ENCODE measurements at regions of chr2 and their contacts with region 1.

Region 1: DNA sequence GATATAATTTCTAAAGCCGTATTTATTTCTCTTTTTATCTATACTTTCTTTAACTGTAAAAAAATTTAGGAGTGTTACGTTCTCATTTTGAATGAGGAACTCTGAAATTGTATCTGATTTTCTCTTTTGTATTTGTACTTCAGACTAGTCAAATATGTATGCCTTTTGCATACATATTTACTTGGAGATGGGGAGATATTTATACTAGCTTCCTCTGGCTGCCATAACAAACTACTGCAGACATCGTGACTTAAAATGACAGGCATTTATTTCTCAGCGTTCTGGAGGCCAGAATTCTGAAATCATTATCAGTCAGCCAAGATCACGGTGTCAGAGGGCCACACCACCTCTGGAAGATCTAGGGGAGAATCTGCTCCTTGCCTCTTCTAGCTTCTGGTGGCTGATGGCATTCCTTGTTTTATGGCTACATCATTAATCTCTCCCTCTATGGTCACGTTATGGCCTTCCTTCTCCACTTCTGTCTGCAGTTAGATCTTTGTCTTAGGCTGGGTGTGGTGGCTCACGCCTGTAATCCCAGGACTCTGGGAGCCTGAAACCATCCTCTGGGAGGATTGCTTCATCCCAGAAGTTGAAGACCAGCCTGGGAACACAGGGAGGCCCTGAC is 8.2 kb downstream of the LCLAT1 start:
- H3K4me3 ChIP-seq: no peak overlapping the region
- H3K27ac ChIP-seq: no peak overlapping the region
- H3K4me1 ChIP-seq: peaks cover 28% of the 10 kb centered on the region
- CTCF ChIP-seq: no peak

Region 2: GRCh38 chr2:29855924-29856639 is 599.1 kb before region 1 on chr2:
- CTCF ChIA-PET with region 1: no interaction called
- POLR2A ChIA-PET with region 1: no interaction called
- H3K4me3 ChIP-seq: no peak overlapping the region
- H3K27ac ChIP-seq: no peak overlapping the region
- H3K4me1 ChIP-seq: no peaks in the 10 kb centered on the region
- CTCF ChIP-seq: no peak

Region 3: GRCh38 chr2:30466216-30466615 is 11.0 kb after region 1 on chr2:
- CTCF ChIA-PET with region 1: interaction called, 11 read pairs
- POLR2A ChIA-PET with region 1: no interaction called
- H3K4me3 ChIP-seq: no peak overlapping the region
- H3K27ac ChIP-seq: no peak overlapping the region
- H3K4me1 ChIP-seq: 0 out of 2 replicates have a peak, but pooled peaks cover 10% of the 10 kb centered on the region
- CTCF ChIP-seq: no peak

Region 4: DNA sequence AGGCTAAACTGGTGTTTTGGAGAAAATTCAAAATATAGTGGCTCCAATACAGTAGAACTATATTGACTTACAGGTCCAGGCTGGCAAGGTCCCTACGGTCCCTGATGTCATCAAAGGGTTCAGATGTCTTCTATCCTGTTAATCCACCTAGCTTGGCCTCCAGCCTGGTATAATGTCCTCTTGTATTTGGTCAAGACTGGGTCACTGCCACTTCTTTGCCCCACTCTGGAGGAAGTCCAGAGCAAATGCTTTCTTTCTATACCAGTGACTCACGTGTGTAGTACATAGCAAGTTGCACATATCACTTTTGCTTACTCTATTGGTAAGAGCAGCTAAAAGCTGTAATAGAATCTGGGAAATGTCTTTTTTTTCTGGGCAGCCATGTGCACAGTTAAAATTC is 72.6 kb after region 1 on chr2:
- CTCF ChIA-PET with region 1: no interaction called
- POLR2A ChIA-PET with region 1: no interaction called
- H3K4me3 ChIP-seq: no peak overlapping the region
- H3K27ac ChIP-seq: no peak overlapping the region
- H3K4me1 ChIP-seq: peaks cover 5% of the 10 kb centered on the region
- CTCF ChIP-seq: no peak

Region 5: GRCh38 chr2:31347750-31348149 is 892.5 kb after region 1 on chr2:
- CTCF ChIA-PET with region 1: no interaction called
- POLR2A ChIA-PET with region 1: no interaction called
- H3K4me3 ChIP-seq: no peak overlapping the region
- H3K27ac ChIP-seq: no peak overlapping the region
- H3K4me1 ChIP-seq: no peaks in the 10 kb centered on the region
- CTCF ChIP-seq: no peak

Measured in HEK293 (cell line).